AG04450 (cell line): ENCODE measurements at regions of chr5 and their contacts with region 1.

Region 1: GRCh38 chr5:137778772-137779564 is 24.8 kb upstream of the HNRNPA0 start:
- DNase-seq: no peak
- H3K4me3 ChIP-seq: no peak overlapping the region
- H3K27ac ChIP-seq: no peak overlapping the region
- H3K27me3 ChIP-seq: peaks cover 7% of the 10 kb centered on the region
- CTCF ChIP-seq: peak; percentile 81

Region 2: GRCh38 chr5:137758715-137759312 is 20.2 kb before region 1 on chr5:
- CTCF ChIA-PET with region 1: interaction called, 23 read pairs
- POLR2A ChIA-PET with region 1: no interaction called
- DNase-seq: no peak
- H3K4me3 ChIP-seq: no peak overlapping the region
- H3K27ac ChIP-seq: no peak overlapping the region
- H3K27me3 ChIP-seq: peaks cover 2% of the 10 kb centered on the region
- CTCF ChIP-seq: no peak

Region 3: DNA sequence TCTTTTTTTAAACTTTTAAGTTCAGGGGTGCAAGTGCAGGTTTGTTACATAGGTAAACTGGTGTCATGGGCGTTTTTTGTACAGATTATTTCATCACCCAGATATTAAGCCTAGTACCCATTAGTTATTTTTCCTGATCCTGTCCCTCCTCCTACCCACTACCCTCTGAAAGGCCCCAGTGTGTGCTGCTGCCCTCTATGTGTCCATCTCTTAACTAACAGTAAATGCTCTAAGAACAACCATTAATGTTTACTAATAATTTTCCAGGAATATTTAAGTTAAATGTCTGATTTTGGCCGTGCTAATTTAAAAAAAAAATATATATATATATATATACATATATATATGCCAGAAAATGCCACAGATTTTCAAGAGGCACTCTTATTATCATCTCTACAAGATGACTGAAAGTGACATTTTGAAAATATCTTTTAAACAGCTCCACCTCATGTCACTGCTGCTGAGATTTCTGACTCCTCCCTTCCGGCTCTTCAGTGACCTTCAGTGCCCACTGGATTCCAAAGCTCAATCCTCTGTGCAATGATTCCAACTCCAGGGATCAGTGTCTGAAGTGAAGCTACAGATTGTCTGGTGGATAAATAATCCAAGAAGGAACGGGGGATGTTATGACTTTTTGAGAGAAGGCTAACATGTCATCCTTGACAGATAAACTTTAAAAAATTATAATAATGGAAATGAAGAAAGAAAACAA is 21.9 kb after region 1 on chr5:
- CTCF ChIA-PET with region 1: interaction called, 23 read pairs
- POLR2A ChIA-PET with region 1: no interaction called
- DNase-seq: no peak
- H3K4me3 ChIP-seq: no peak overlapping the region
- H3K27ac ChIP-seq: no peak overlapping the region
- H3K27me3 ChIP-seq: no peaks in the 10 kb centered on the region
- CTCF ChIP-seq: no peak

Region 4: GRCh38 chr5:137822158-137822764 is 43.3 kb after region 1 on chr5:
- CTCF ChIA-PET with region 1: interaction called, 14 read pairs
- POLR2A ChIA-PET with region 1: no interaction called
- DNase-seq: peak; percentile 3
- H3K4me3 ChIP-seq: no peak overlapping the region
- H3K27ac ChIP-seq: no peak overlapping the region
- H3K27me3 ChIP-seq: peaks cover 6% of the 10 kb centered on the region
- CTCF ChIP-seq: peak; percentile 51

Region 5: DNA sequence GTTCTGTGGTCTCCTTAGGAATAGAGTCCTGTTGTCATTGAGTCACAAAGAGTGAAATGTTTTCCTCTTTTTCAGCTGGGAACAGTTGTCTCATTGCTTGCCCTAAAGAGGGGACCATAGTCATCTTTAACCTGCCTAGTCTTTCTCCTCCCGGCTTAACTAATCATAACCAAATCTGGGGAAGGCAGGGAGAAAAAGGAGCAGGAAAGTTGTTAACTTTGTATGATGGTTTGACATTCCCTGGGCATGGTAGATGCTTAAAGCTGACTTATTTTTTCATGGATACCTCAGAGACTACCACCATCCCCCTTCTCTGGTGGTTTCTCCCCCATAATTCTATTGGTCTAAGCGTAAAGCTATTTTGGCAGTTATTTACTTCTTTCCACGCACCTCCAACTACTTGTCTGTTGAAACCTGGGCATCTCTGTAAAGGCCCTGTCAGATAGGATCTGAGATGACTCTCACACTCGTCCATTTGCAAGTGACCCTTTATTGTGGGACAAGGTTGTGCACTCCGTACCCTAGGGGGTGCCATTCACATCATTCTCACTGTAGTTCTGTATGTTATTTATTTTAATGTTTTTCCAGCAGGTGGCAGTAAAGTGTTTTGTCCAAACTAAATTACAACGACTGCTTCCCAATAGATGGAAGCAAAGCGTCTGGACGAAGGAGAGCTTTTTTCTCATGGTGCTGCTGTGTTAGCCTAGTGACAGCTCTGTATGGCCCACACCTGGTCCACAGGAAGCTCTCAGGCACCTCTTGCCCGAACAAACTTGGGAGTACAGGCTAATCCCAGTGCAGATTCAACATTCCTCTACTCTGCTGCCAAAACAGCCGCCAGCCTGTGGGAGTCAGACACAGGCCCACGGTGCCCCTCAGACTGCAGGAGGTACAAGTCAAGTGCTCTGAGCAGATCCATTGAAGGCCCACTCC is 256.9 kb after region 1 on chr5:
- CTCF ChIA-PET with region 1: interaction called, 12 read pairs
- POLR2A ChIA-PET with region 1: no interaction called
- DNase-seq: peak; percentile 68
- H3K4me3 ChIP-seq: no peak overlapping the region
- H3K27ac ChIP-seq: no peak overlapping the region
- H3K27me3 ChIP-seq: no peaks in the 10 kb centered on the region
- CTCF ChIP-seq: peak; percentile 87

Region 6: DNA sequence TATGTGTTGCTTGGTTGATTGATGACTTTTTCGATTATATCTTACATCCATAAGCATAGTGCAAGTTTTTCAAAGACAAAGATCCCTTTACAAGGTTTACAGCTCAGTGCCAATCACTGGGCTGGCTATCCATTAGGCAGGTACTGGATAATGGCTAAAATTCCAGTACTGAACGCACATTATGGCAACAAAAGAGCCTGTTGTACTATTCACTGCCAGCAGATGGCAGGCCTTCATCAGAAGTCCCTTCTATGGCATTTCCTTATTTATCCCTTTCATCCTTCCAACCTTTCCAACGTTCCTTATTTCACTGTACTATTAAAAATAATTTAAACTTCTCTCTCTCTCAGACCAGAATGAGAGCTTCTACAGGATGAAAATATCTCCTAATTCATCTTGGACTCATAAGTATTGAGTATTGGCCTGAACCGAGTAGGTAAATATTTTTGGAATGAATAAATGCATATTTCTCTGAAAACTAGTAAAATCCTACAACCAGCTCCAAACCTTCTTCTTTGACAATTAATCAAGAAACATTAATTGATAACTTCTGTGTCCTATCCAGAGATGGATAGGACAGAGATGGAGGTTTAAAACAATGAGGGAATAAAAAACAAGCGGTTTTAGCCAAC is 298.2 kb after region 1 on chr5:
- CTCF ChIA-PET with region 1: interaction called, 15 read pairs
- POLR2A ChIA-PET with region 1: no interaction called
- DNase-seq: peak; percentile 23
- H3K4me3 ChIP-seq: no peak overlapping the region
- H3K27ac ChIP-seq: no peak overlapping the region
- H3K27me3 ChIP-seq: peaks cover 4% of the 10 kb centered on the region
- CTCF ChIP-seq: peak; percentile 93